PC-9 (cell line): ENCODE measurements at regions of chr6 and their contacts with region 1.

Region 1: DNA sequence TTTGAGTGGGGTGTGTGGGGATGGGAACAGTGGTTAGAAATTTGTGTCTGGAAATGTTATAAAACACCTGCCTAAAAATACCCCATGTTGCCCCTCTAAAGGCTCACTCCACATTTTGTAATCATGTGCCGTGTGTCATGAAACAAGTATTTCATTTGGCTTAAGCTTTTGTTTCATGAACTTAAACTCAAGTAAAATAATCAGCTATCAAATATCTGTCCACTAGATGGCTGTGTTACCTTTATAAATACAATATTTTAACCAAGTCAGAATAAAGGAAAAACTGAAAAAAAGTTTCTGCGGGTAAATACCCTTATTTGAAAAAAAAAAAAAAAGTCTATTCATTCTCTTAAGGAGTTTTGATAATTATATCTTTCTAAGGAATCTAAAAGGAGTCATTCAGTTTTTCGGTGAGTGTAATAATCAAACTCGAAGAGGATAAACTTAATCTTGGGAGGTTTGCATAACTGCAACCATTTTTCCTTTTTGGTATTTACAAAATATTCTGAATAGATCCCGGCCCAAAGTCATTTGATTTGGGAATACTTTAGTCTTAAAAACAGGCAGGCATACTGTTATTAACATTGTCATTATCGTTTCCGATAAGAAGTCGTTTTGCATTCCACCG is 29.9 kb upstream of the MTRF1L start:
- DNase-seq: peak in 1 of 2 experiments; percentile 53
- H3K4me3 ChIP-seq: no peak overlapping the region
- H3K27ac ChIP-seq: peak overlapping the region; percentile 62
- H3K4me1 ChIP-seq: peaks cover 20% of the 10 kb centered on the region
- H3K27me3 ChIP-seq: no peaks in the 10 kb centered on the region
- CTCF ChIP-seq: peak; percentile 78

Region 2: DNA sequence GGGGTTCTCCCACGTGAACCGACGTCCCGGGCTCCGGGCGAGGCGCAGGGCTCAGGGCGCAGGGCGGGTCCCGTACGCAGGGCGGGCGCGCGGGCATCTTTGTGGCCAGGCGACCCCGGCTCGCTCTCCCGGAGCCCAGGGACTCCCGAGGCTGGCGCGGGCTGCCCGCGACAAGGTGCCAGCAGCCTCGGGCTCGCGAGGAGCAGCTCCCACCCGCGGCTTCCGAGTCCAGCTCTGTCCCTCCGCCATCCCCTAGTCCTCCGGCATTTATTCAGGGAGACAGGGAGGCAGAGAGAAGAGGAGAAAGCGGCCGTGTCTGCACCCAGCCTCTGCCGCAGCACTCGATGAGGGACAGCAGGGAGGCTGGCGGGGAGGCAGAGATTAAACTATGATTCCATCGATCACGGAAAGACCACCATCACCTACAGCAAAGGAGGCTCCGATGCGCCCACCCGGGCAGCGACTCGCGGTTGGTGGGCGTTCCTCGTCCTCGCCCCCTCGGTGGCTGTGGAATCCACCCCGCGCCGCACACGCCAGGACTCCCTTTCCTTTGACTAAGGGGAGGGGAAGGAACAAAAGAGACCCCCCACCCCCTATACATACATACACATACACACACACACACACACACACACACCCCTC is 97.6 kb after region 1 on chr6:
- CTCF ChIA-PET with region 1: interaction called, 3 read pairs
- POLR2A ChIA-PET with region 1: no interaction called
- intact Hi-C with region 1: loop called (anchors 5 kb)
- DNase-seq: peak in 1 of 2 experiments; percentile 3
- H3K4me3 ChIP-seq: peak overlapping the region; percentile 78
- H3K27ac ChIP-seq: no peak overlapping the region
- H3K4me1 ChIP-seq: peaks cover 30% of the 10 kb centered on the region
- H3K27me3 ChIP-seq: no peaks in the 10 kb centered on the region
- CTCF ChIP-seq: no peak

Region 3: DNA sequence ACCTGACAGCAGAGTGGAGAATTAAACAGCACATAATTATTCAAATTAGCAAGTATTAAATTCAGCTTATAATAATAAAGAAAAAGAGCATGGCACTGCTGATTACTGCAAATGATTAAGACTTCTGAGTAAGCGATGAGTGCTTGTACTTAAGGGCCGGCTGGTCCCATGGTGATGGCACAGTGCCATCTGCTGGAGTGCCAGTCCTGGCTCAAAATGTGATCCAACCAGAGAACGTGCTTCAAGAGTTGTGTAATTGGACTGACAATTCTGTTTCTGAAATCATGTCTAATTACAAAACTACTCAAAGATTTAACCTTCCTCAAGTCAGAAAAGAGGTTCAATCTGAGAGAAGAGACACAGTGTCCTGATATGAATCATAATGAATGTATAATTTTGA is 280.3 kb after region 1 on chr6:
- CTCF ChIA-PET with region 1: interaction called, 3 read pairs
- POLR2A ChIA-PET with region 1: no interaction called
- intact Hi-C with region 1: loop called (anchors 1 kb)
- DNase-seq: peak in 1 of 2 experiments; percentile 46
- H3K4me3 ChIP-seq: no peak overlapping the region
- H3K27ac ChIP-seq: no peak overlapping the region
- H3K4me1 ChIP-seq: no peaks in the 10 kb centered on the region
- H3K27me3 ChIP-seq: no peaks in the 10 kb centered on the region
- CTCF ChIP-seq: peak; percentile 71

Region 4: GRCh38 chr6:153511896-153512496 is 479.6 kb after region 1 on chr6:
- CTCF ChIA-PET with region 1: no interaction called
- POLR2A ChIA-PET with region 1: no interaction called
- intact Hi-C with region 1: loop called (anchors 1 kb)
- DNase-seq: no peak
- H3K4me3 ChIP-seq: no peak overlapping the region
- H3K27ac ChIP-seq: no peak overlapping the region
- H3K4me1 ChIP-seq: no peaks in the 10 kb centered on the region
- H3K27me3 ChIP-seq: no peaks in the 10 kb centered on the region
- CTCF ChIP-seq: peak; percentile 74

Region 5: DNA sequence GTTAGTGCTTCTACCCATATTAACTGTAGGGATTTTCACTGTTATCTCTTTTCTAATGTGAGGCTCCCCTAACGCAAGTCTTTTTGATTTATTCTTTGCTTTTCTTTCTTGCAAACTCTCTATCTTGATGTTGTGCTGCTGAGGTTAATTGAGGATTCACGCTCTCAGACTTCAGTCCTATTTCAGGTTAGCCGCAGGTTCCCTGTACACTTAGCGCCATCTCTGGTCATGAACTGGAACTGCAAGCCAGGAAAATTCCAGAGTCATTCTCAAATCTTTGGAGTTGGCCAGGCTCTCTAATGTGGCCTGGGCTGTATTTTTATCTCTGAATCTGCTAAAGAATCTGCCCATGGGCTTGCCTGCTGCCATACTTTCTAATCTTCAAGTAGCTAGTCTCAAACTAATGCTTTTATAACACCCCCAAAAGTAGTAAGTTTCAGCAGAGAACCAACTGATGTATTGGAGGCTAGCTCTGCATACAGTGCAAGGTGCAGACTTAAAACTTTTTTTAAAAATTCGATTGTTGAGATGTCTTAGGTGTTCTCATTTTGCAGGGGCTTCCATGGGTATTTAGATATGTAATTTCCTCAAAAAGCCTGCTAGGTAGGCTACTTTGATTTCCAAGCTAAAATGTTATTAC is 915.6 kb after region 1 on chr6:
- CTCF ChIA-PET with region 1: no interaction called
- POLR2A ChIA-PET with region 1: no interaction called
- intact Hi-C with region 1: loop called (anchors 10 kb)
- DNase-seq: peak in 1 of 2 experiments; percentile 10
- H3K4me3 ChIP-seq: no peak overlapping the region
- H3K27ac ChIP-seq: no peak overlapping the region
- H3K4me1 ChIP-seq: no peaks in the 10 kb centered on the region
- H3K27me3 ChIP-seq: no peaks in the 10 kb centered on the region
- CTCF ChIP-seq: peak; percentile 89

Region 6: DNA sequence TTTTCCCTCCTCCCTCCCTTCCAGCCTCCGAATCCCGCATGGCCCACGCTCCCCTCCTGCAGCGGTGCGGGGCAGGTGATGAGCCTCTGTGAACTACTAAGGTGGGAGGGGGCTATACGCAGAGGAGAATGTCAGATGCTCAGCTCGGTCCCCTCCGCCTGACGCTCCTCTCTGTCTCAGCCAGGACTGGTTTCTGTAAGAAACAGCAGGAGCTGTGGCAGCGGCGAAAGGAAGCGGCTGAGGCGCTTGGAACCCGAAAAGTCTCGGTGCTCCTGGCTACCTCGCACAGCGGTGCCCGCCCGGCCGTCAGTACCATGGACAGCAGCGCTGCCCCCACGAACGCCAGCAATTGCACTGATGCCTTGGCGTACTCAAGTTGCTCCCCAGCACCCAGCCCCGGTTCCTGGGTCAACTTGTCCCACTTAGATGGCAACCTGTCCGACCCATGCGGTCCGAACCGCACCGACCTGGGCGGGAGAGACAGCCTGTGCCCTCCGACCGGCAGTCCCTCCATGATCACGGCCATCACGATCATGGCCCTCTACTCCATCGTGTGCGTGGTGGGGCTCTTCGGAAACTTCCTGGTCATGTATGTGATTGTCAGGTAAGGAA is 1007.0 kb after region 1 on chr6 and contains the start of gene OPRM1:
- CTCF ChIA-PET with region 1: no interaction called
- POLR2A ChIA-PET with region 1: no interaction called
- intact Hi-C with region 1: loop called (anchors 10 kb)
- DNase-seq: no peak
- H3K4me3 ChIP-seq: no peak within 1 kb of the TSS
- H3K27ac ChIP-seq: no peak within 1 kb of the TSS
- H3K4me1 ChIP-seq: no peaks in the 10 kb centered on the region
- H3K27me3 ChIP-seq: no peaks in the 10 kb centered on the region
- CTCF ChIP-seq: no peak
- total RNA-seq, gene OPRM1: not detected in 2 replicates